Left ventricle myocardium inferior (tissue), 1 donor: ENCODE measurements at regions of chr11 and their contacts with region 1.

Region 1: GRCh38 chr11:47616726-47617416 is 22.7 kb upstream of the C1QTNF4 start:
- DNase-seq: no peak
- H3K4me3 ChIP-seq: no peak overlapping the region
- H3K27ac ChIP-seq: no peak overlapping the region
- H3K4me1 ChIP-seq: peaks cover 10% of the 10 kb centered on the region
- H3K27me3 ChIP-seq: no peaks in the 10 kb centered on the region
- CTCF ChIP-seq: peak; percentile 75

Region 2: GRCh38 chr11:47466701-47467250 is 150.1 kb before region 1 on chr11:
- intact Hi-C with region 1: loop called (anchors 10 kb)
- DNase-seq: peak; percentile 23
- H3K4me3 ChIP-seq: peak overlapping the region; percentile 37
- H3K27ac ChIP-seq: peak overlapping the region; percentile 76
- H3K4me1 ChIP-seq: peaks cover 53% of the 10 kb centered on the region
- H3K27me3 ChIP-seq: no peaks in the 10 kb centered on the region
- CTCF ChIP-seq: no peak